ENCODE measurements at regions of chr5 and their contacts with region 1.

Region 1: DNA sequence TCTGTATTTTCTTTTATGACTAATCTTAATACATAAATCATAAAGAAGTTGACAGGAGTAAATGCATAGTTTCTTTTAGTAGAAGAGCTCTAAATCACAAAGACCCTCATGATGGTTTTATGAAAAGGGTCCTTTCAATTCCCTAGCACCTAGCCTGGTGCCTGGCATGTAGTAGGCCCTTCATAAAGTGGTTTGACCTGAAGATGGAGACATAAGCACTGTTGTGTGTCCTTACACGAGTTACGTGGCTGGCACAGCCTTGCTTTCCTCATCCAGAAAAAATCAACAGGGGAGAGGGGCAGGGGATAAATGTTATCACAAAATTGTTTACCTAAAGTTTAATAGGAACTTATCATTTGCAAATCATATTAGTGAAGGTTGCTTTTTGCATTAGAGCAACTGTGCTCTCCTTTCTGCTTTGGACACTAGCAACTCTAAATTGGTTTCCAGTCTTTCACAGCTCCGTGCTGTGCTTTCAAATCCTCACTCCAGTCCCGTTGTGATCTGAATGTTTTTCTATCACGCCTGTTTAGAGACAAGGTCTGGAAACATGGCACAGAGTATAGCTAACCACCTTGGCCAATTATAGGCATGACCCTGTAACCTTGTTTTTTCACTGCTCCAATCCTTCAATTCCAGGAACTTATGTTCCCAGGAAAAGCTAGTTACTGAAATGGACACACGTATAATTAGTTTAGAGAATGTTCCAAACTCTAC is 55.7 kb downstream of the ARL15 start:
- DNase-seq: no peak

Region 2: GRCh38 chr5:54063817-54064216 is 190.8 kb before region 1 on chr5:
- intact Hi-C with region 1: no loop called
- DNase-seq: no peak

Region 3: DNA sequence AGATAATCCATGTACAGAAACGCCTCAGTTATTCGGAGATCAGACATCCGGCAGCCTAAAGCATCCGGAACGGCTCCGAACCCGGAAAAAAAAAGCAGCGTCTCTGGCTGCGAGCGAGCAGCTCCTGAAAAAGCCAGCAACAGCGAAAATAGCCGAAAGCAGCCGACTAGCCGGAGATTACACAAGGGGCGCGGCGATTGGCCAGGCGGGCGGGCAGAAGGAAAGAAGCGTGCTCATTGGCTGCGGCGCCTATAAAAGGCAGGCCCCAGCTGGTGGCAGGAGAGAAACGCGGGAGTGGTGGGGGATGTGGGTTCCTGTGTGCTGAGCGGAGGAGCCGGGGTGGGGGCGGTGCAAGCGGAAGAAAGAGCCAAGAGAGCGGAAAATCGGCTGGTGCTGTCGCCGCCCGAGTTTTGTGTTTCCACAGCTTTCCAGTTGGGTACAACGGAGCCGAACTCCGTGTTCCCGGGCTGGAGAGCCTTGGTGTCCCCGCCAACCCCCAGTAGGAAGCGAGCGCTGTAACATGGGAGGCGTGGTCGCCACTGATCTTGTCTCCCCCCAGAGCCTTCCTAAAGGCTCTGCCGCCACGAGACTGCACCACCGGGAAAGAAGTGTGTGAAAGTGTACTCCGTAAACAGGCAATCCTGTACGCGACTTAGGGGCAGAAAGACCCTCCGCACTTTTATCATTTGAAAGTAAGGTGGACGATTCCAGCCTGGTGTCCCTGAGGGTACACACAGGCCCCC is 56.0 kb after region 1 on chr5 and contains the start of gene ARL15:
- intact Hi-C with region 1: loop called (anchors 2 kb)
- DNase-seq: peak; percentile 100
- total RNA-seq, gene ARL15: 21.3 TPM

Measured in cardiac septum (tissue), 1 donor.